ENCODE measurements at regions of chr10 and their contacts with region 1.

Region 1: DNA sequence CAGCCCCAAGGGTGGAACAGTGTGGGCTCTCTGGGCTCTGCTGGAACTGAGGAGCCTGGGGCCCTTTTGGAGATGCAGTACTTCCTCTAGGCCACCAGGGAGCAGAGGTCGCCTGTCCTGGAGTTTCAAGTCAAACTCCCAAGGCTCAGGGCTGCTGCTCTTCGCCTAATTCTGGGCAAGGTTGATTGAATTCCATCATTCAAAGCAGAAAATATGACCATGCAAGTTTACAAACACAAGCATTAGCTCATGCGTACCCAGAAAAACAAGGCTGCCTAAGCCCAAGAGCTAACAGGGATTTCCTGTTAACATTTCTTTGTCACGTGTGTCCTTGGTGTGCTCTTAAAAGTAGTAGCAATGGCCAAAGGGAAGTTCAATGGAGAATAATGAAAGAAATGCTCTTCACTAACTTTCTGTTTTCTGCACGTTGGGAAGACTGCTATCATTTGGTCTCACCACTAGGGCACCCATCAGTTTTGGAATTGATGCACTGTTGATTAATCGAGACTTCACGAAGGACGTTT is 20.1 kb downstream of the LDB3 start:
- DNase-seq: peak; percentile 54 to 68
- H3K4me3 ChIP-seq: no peak overlapping the region
- H3K27ac ChIP-seq: no peak overlapping the region
- H3K4me1 ChIP-seq: peaks cover 3 to 23% (median 9%) of the 10 kb centered on the region in 4 experiments; a peak in 6 of 7 replicates
- H3K27me3 ChIP-seq: no peaks in the 10 kb centered on the region
- CTCF ChIP-seq: peak; percentile 81 to 92 (median 87)
- EP300 ChIP-seq: no peak
- POLR2A ChIP-seq: no peak
- RAD21 ChIP-seq: peak; percentile 96 to 99

Region 2: DNA sequence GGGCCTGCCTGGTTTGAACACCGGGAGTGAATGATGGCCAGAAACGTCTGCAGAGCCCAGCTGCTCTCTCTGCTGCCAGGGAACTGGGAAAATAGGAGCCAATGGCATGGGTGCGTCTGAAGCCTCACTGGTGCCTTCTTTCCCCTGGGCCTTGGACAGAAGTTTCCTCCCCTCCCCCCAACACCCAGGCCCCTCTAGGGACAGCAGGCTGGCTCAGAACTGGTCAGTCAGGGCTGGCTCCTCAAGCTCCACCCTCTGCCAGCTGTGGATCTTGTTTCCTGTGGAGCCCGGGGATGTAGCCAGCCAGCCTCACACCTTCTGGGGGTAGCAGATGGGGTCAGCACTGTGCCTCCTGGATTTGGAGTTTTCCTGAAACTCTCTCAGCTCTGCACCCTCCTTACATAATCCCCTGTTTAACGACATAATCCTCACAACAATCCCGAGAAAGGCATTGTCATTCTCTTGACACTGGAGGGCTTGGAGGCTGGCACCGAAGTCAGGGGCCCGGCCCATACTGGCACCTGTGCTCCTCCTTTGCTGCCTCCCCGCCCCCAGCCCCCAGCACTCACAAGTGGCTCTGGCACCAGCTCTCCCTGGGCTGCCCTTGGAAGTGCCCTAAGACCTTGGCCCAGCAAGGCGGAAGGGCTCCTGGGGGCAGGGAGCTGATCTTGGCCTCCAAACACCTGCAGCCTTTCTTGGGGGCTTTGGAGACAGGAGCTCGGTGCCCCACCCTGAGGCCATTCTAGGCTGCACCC is 14.5 kb before region 1 on chr10:
- CTCF ChIA-PET with region 1: interaction called, 105 read pairs
- POLR2A ChIA-PET with region 1: no interaction called
- DNase-seq: no peak
- H3K4me3 ChIP-seq: no peak overlapping the region
- H3K27ac ChIP-seq: no peak overlapping the region
- H3K4me1 ChIP-seq: peaks cover 3 to 38% (median 21%) of the 10 kb centered on the region in 4 experiments
- H3K27me3 ChIP-seq: no peaks in the 10 kb centered on the region
- CTCF ChIP-seq: no peak
- EP300 ChIP-seq: no peak
- POLR2A ChIP-seq: no peak
- RAD21 ChIP-seq: no peak

Region 3: DNA sequence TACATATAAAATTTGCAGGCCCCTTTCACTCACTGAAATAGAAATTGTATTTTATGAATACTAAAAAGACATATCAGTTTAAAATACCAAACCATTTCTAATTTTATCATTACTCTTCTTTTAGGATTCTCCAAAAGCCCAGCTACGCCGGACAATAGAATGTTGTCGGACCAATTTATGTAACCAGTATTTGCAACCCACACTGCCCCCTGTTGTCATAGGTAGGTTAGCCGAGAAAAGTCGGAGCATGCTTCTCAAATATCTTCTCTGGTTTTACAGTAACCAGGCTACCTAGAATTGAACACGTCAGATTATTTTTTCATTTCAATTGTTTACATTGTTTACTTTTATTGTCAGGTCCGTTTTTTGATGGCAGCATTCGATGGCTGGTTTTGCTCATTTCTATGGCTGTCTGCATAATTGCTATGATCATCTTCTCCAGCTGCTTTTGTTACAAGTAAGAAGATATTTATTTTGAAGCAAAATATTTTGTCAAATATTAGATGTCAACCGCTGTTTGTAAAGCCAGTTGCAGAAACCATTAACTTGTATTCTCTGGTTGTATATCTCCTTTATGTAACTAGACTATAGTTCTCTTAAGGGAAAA is 211.3 kb after region 1 on chr10:
- CTCF ChIA-PET with region 1: interaction called, 40 read pairs
- POLR2A ChIA-PET with region 1: interaction called, 3 read pairs
- DNase-seq: no peak
- H3K4me3 ChIP-seq: no peak overlapping the region
- H3K27ac ChIP-seq: no peak overlapping the region
- H3K4me1 ChIP-seq: peaks cover 0 to 6% (median 2%) of the 10 kb centered on the region in 4 experiments; a peak in 3 of 7 replicates
- H3K27me3 ChIP-seq: no peaks in the 10 kb centered on the region
- CTCF ChIP-seq: peak in 2 of 3 experiments; percentile 53 to 64; a peak in 3 of 4 replicates
- EP300 ChIP-seq: no peak
- POLR2A ChIP-seq: no peak
- RAD21 ChIP-seq: peak; percentile 76 to 77

Region 4: GRCh38 chr10:86945361-86946212 is 257.1 kb after region 1 on chr10:
- CTCF ChIA-PET with region 1: interaction called, 36 read pairs
- POLR2A ChIA-PET with region 1: no interaction called
- DNase-seq: peak; percentile 53 to 80
- H3K4me3 ChIP-seq: no peak overlapping the region
- H3K27ac ChIP-seq: no peak overlapping the region
- H3K4me1 ChIP-seq: peaks cover 2 to 5% (median 3%) of the 10 kb centered on the region in 4 experiments; a peak in 6 of 7 replicates
- H3K27me3 ChIP-seq: no peaks in the 10 kb centered on the region; a peak in 2 of 7 replicates
- CTCF ChIP-seq: peak; percentile 91 to 93 (median 93)
- EP300 ChIP-seq: no peak
- POLR2A ChIP-seq: no peak
- RAD21 ChIP-seq: peak; percentile 87 to 88

Region 5: GRCh38 chr10:86971232-86971991 is 283.0 kb after region 1 on chr10:
- CTCF ChIA-PET with region 1: interaction called, 17 read pairs
- POLR2A ChIA-PET with region 1: no interaction called
- DNase-seq: peak in 1 of 2 experiments; percentile 77
- H3K4me3 ChIP-seq: peak overlapping the region; percentile 34 to 68 (median 46)
- H3K27ac ChIP-seq: no peak overlapping the region
- H3K4me1 ChIP-seq: peaks cover 4 to 34% (median 27%) of the 10 kb centered on the region in 4 experiments
- H3K27me3 ChIP-seq: peaks cover 1 to 20% (median 16%) of the 10 kb centered on the region in 4 experiments
- CTCF ChIP-seq: no peak
- EP300 ChIP-seq: no peak
- POLR2A ChIP-seq: peak in 1 of 2 experiments; percentile 21; a peak in 1 of 3 replicates
- RAD21 ChIP-seq: no peak; a peak in 1 of 4 replicates

Measured in H1 (cell line).